B cell (primary cell): ENCODE measurements at regions of chr7 and their contacts with region 1.

Region 1: GRCh38 chr7:69837387-69838068 is 239.3 kb downstream of the AUTS2 start:
- DNase-seq: no peak
- ATAC-seq: no peak
- H3K4me3 ChIP-seq: no peak overlapping the region
- H3K4me3 Mint-ChIP-seq: no peak overlapping the region
- H3K27ac ChIP-seq: no peak overlapping the region
- H3K27ac Mint-ChIP-seq: no peak overlapping the region
- H3K4me1 ChIP-seq: peaks cover 26 to 30% of the 10 kb centered on the region in 2 donors
- H3K4me1 Mint-ChIP-seq: peaks cover 38% of the 10 kb centered on the region
- H3K27me3 ChIP-seq: no peaks in the 10 kb centered on the region
- H3K27me3 Mint-ChIP-seq: no peaks in the 10 kb centered on the region
- CTCF ChIP-seq: no peak

Region 2: GRCh38 chr7:69893906-69894305 is 56.4 kb after region 1 on chr7:
- CTCF ChIA-PET with region 1: interaction called, 3 read pairs
- POLR2A ChIA-PET with region 1: no interaction called
- intact Hi-C with region 1: loop called (anchors 5 kb)
- DNase-seq: peak; percentile 26
- ATAC-seq: peak; percentile 24
- H3K4me3 ChIP-seq: no peak overlapping the region
- H3K4me3 Mint-ChIP-seq: no peak overlapping the region
- H3K27ac ChIP-seq: no peak overlapping the region
- H3K27ac Mint-ChIP-seq: no peak overlapping the region
- H3K4me1 ChIP-seq: peaks cover 8 to 14% of the 10 kb centered on the region in 2 donors
- H3K4me1 Mint-ChIP-seq: peaks cover 36% of the 10 kb centered on the region
- H3K27me3 ChIP-seq: no peaks in the 10 kb centered on the region
- H3K27me3 Mint-ChIP-seq: no peaks in the 10 kb centered on the region
- CTCF ChIP-seq: peak; percentile 49